ENCODE measurements at regions of chr10 and their contacts with region 1.

Region 1: GRCh38 chr10:52729271-52730104 is 43.1 kb downstream of the MBL2 start:
- DNase-seq: no peak
- ATAC-seq: peak in 1 of 2 donors; percentile 19

Region 2: DNA sequence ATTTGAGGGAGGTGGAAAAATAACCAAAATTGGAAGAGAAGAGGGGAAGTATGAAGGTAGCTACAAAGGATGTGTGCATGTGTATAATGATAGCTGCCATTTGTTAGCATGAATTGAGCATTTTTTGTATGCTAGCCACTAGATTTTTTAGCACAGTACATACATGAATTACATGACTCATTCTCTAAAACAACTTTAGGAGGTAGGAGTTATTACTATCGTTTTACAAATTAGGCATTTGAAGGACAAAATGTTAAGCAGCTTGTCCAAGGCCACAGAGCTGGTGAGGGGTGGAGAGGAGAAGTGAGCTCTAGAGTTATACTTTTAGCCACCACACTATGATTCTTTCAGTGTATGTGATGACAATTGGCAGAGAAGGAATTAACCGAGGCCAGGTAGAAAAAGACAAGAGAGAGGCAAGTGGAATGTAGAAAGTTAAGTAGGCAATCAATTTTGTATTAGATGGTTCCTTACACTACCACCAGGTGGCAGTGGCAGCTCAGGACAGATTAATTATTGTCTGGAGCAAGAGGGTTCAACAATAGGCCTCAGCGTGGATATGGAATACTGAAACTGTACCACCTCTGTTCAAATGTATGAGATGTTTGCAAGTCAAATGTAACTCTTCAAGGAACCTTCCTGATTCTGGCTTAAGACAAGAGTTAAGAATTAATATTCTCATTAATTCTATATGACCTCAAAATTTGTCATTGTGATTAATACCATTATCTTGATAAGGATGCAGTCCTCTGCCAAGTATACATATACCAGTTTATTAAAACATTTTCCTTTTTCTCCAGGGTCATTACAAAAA is 84.9 kb before region 1 on chr10:
- intact Hi-C with region 1: loop called in 1 of 2 experiments (anchors 2 kb)
- DNase-seq: peak; percentile 38
- ATAC-seq: peak in 1 of 2 donors; percentile 49

Region 3: GRCh38 chr10:52768001-52768532 is 38.6 kb after region 1 on chr10:
- intact Hi-C with region 1: no loop called
- DNase-seq: no peak
- ATAC-seq: peak in 1 of 2 donors; percentile 40

Region 4: DNA sequence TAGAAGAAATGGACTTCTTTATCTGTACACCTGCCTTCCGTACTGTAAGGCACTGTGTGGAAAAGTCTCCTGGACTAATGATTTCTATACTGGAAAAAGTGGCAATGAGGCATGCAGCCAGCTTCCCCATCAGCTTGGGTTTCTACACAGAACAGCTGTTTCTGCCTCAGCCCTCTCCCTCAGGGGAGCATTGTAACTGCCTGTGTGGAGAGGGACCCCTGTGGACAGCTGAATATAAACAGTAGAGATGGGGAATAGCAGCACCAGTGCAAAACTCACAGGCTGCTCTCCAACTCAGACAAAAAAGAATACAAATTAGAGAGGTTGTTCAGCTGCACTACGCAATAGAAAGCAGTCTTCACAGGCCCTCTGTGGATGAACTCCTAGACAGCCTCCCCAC is 494.4 kb after region 1 on chr10:
- intact Hi-C with region 1: no loop called
- DNase-seq: no peak
- ATAC-seq: no peak

Measured in left cardiac atrium (tissue), 4 donors.